Right cardiac atrium (tissue), 5 donors: ENCODE measurements at regions of chr4 and their contacts with region 1.

Region 1: GRCh38 chr4:87679449-87680169 is 29.5 kb downstream of the DMP1 start:
- DNase-seq: peak; percentile 61 to 71 (median 65)
- ATAC-seq: peak; percentile 71 to 84
- H3K4me3 ChIP-seq: no peak overlapping the region
- H3K27ac ChIP-seq: no peak overlapping the region
- H3K4me1 ChIP-seq: no peaks in the 10 kb centered on the region
- H3K27me3 ChIP-seq: no peaks in the 10 kb centered on the region

Region 2: DNA sequence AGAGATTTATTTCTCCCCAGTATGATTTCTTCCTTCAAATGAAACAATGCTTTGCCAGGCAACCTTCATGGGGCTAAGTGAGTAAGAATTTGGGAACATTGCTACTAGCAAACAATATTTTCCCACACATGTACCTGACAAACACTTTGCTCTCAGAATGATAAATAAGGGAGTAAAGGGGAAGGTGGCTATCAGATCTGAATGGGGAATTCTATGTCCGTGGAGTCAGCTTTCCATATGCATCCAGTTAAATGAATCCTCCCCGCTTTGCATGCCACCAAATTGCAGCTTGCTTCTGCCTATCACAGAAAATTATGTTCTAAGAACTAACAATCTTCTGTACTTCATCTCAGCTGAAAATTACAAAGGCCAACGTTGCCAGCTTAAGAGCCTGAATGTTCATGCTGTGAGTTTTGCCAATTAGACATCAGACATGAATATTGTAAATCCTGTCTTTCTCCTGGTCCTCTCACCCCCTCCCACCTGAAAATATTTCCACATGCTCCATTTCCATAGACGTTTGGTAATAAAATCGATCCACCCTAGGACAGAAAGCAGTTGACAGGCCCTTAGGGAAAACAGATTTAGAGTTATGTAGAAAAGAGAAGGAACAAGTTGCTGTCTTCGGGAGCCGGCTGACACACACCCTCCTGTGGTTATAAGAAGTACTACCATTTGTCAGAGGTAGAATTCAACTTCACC is 159.4 kb after region 1 on chr4:
- intact Hi-C with region 1: loop called in 3 of 4 experiments (anchors 5 to 10 kb)
- DNase-seq: peak in 2 of 3 donors; percentile 27 to 43
- ATAC-seq: peak; percentile 52 to 61
- H3K4me3 ChIP-seq: no peak overlapping the region
- H3K27ac ChIP-seq: no peak overlapping the region
- H3K4me1 ChIP-seq: no peaks in the 10 kb centered on the region
- H3K27me3 ChIP-seq: no peaks in the 10 kb centered on the region

Region 3: GRCh38 chr4:87973283-87974169 is 293.9 kb after region 1 on chr4:
- intact Hi-C with region 1: loop called in 1 of 4 experiments (anchors 10 kb)
- DNase-seq: peak; percentile 37 to 73 (median 59)
- ATAC-seq: peak; percentile 57 to 74
- H3K4me3 ChIP-seq: no peak overlapping the region
- H3K27ac ChIP-seq: no peak overlapping the region
- H3K4me1 ChIP-seq: no peaks in the 10 kb centered on the region
- H3K27me3 ChIP-seq: no peaks in the 10 kb centered on the region

Region 4: GRCh38 chr4:87985097-87985886 is 305.7 kb after region 1 on chr4:
- intact Hi-C with region 1: loop called in 1 of 4 experiments (anchors 10 kb)
- DNase-seq: peak; percentile 38 to 73 (median 66)
- ATAC-seq: peak; percentile 87 to 89
- H3K4me3 ChIP-seq: no peak overlapping the region
- H3K27ac ChIP-seq: no peak overlapping the region
- H3K4me1 ChIP-seq: no peaks in the 10 kb centered on the region
- H3K27me3 ChIP-seq: no peaks in the 10 kb centered on the region